AG04450 (cell line): ENCODE measurements at regions of chr9 and their contacts with region 1.

Region 1: GRCh38 chr9:13088720-13089427 is 190.6 kb downstream of the MPDZ start:
- DNase-seq: peak; percentile 13
- H3K4me3 ChIP-seq: no peak overlapping the region
- H3K27ac ChIP-seq: no peak overlapping the region
- H3K27me3 ChIP-seq: no peaks in the 10 kb centered on the region
- CTCF ChIP-seq: peak; percentile 71

Region 2: DNA sequence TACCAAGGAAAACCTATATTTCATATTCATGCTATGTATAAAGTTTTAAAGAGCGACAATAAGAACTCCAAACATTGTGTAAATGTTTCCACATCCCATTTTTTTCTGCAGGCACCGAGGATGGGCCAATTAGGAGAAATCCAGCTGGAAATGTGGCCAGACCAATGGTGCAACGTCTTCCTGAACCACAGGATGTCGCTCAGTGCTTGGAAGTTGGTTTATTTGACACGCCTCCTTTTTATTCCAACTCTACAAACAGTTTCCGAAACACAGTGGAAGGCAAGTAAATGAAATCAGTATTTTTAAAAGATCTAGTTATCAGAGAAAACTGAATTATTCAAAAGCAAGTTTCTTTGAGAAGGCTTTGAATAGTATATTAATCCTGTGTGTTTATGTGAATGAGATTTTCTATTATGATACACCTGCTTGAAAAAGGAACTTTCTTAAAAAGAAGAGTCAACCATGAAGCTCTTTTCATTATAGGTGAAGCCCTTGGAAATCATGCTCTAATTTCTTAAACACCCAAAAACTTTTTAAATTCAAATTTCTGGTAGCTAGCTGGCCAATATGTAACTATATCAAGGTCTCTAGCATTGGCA is 386.6 kb before region 1 on chr9:
- CTCF ChIA-PET with region 1: interaction called, 27 read pairs
- POLR2A ChIA-PET with region 1: no interaction called
- DNase-seq: no peak
- H3K4me3 ChIP-seq: no peak overlapping the region
- H3K27ac ChIP-seq: no peak overlapping the region
- H3K27me3 ChIP-seq: no peaks in the 10 kb centered on the region
- CTCF ChIP-seq: peak; percentile 66

Region 3: GRCh38 chr9:12775679-12776512 is 313.0 kb before region 1 on chr9:
- CTCF ChIA-PET with region 1: interaction called, 11 read pairs
- POLR2A ChIA-PET with region 1: no interaction called
- DNase-seq: peak; percentile 76
- H3K4me3 ChIP-seq: peak overlapping the region; percentile 90
- H3K27ac ChIP-seq: peak overlapping the region; percentile 89
- H3K27me3 ChIP-seq: no peaks in the 10 kb centered on the region
- CTCF ChIP-seq: peak; percentile 59

Region 4: GRCh38 chr9:13078164-13078563 is 10.7 kb before region 1 on chr9:
- CTCF ChIA-PET with region 1: interaction called, 14 read pairs
- POLR2A ChIA-PET with region 1: no interaction called
- DNase-seq: no peak
- H3K4me3 ChIP-seq: no peak overlapping the region
- H3K27ac ChIP-seq: no peak overlapping the region
- H3K27me3 ChIP-seq: no peaks in the 10 kb centered on the region
- CTCF ChIP-seq: no peak

Region 5: DNA sequence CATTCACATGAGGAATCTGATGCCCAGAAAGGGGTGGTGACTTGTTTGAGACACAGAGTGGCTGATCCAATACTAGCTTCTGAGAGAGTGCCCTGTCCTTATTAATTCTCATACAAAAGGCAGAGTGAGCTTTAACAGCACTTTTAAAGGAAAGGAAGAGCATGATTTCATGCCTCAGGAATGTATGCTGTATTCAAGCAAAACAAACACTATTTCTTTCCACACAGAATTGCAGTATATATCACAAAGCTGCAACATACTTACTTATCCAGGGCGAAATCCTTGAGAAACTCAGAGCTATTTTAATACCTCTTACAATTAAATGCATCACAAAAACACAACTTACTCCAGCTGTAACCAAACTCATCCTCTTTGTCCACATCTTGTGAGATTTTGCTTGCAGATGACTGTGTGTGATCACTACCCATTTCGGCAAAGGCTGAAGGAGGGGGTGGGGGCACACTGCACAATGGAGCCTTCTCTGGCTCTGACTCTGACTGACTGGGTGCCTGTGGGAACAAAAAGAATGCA is 50.8 kb after region 1 on chr9:
- CTCF ChIA-PET with region 1: interaction called, 20 read pairs
- POLR2A ChIA-PET with region 1: no interaction called
- DNase-seq: peak; percentile 64
- H3K4me3 ChIP-seq: peak overlapping the region; percentile 48
- H3K27ac ChIP-seq: peak overlapping the region; percentile 93
- H3K27me3 ChIP-seq: no peaks in the 10 kb centered on the region
- CTCF ChIP-seq: no peak

Region 6: GRCh38 chr9:13228431-13228830 is 139.6 kb after region 1 on chr9:
- CTCF ChIA-PET with region 1: no interaction called
- POLR2A ChIA-PET with region 1: no interaction called
- DNase-seq: no peak
- H3K4me3 ChIP-seq: no peak overlapping the region
- H3K27ac ChIP-seq: no peak overlapping the region
- H3K27me3 ChIP-seq: no peaks in the 10 kb centered on the region
- CTCF ChIP-seq: no peak